MCF 10A (cell line): ENCODE measurements at regions of chr12 and their contacts with region 1.

Region 1: DNA sequence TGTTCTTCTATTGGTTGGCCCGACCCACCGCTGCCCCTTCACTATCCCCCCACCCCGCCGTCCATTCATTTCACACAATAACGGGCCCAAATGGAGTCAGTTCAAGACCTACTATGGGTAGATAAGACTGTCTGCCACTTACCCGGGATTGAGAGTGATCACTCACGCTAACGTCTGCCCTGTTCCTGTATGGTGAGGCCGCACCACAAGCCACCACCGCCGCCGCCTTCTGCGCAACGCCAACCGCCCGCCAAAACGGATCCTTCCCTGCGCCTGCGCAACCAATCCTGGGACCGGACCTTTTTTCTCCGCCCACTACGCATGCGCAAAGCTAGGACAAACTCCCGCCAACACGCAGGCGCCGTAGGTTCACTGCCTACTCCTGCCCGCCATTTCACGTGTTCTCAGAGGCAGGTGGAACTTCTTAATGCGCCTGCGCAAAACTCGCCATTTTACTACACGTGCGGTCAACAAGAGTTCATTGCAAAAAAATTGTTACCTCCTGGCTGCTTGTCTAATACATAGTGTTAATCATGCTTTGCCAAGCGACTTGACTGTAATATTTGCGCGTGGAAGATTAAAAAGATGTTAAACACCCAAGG is at the start of gene CBX5:
- DNase-seq: peak; percentile 99
- H3K4me3 Mint-ChIP-seq: no peak within 1 kb of the TSS
- H3K27ac Mint-ChIP-seq: no peak within 1 kb of the TSS
- H3K4me1 Mint-ChIP-seq: peaks cover 23% of the 10 kb centered on the region
- H3K27me3 Mint-ChIP-seq: no peaks in the 10 kb centered on the region
- CTCF ChIP-seq: no peak
- total RNA-seq, gene CBX5: 109 and 112 TPM in 2 replicates

Region 2: GRCh38 chr12:53999559-54000104 is 280.3 kb before region 1 on chr12:
- CTCF ChIA-PET with region 1: no interaction called
- POLR2A ChIA-PET with region 1: interaction called, 13 read pairs
- intact Hi-C with region 1: no loop called
- DNase-seq: peak; percentile 90
- H3K4me3 Mint-ChIP-seq: peak overlapping the region; percentile 89
- H3K27ac Mint-ChIP-seq: peak overlapping the region; percentile 97
- H3K4me1 Mint-ChIP-seq: peaks cover 12% of the 10 kb centered on the region
- H3K27me3 Mint-ChIP-seq: no peaks in the 10 kb centered on the region
- CTCF ChIP-seq: no peak

Region 3: GRCh38 chr12:54220092-54220557 is 59.8 kb before region 1 on chr12:
- CTCF ChIA-PET with region 1: interaction called, 4 read pairs
- POLR2A ChIA-PET with region 1: interaction called, 12 read pairs
- intact Hi-C with region 1: loop called (anchors 5 kb)
- DNase-seq: peak; percentile 75
- H3K4me3 Mint-ChIP-seq: no peak overlapping the region
- H3K27ac Mint-ChIP-seq: no peak overlapping the region
- H3K4me1 Mint-ChIP-seq: peaks cover 18% of the 10 kb centered on the region
- H3K27me3 Mint-ChIP-seq: no peaks in the 10 kb centered on the region
- CTCF ChIP-seq: peak; percentile 78

Region 4: DNA sequence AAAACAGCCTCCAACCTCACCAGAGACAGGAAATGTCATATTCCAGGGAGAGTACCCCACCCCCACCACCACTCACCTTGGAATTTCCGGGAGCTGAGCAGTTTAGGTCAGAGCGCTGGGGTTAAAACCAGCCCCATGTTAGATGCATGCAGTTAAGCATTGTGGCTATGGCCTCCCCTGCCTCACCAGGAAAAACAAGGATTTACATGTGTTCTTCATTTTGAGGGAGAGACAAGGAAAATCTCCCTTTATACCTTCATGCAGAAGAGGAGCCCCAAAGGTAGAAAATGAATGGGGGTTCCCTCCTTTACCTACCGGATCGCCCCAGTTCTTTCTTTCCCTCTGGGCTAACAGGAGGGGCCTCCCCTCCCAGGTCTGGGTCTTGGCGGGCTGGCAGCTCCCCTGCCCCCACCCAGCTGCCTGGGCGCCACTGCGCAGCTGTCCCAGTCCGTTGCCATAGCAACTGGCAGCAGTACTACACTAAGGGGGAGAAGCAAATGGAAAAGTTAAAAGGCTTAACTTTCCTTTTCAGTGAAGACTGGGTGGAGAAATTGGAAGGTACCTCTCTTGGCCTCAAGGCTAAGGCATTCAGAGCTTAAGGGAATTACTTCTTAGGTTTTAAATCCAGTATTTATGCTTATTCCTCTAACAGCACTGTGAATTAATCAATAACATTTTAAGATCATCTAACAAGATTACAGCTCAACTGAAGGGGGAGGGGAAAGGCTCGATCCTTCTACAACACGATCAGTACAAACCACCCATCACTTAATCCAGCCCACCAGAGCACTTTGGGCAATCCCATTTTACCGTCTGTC is 20.6 kb before region 1 on chr12:
- CTCF ChIA-PET with region 1: interaction called, 7 read pairs
- POLR2A ChIA-PET with region 1: interaction called, 99 read pairs
- intact Hi-C with region 1: loop called (anchors 2 kb)
- DNase-seq: peak; percentile 76
- H3K4me3 Mint-ChIP-seq: peak overlapping the region; percentile 63
- H3K27ac Mint-ChIP-seq: peak overlapping the region; percentile 83
- H3K4me1 Mint-ChIP-seq: peaks cover 14% of the 10 kb centered on the region
- H3K27me3 Mint-ChIP-seq: no peaks in the 10 kb centered on the region
- CTCF ChIP-seq: no peak

Region 5: GRCh38 chr12:54300732-54301427 is 20.9 kb after region 1 on chr12 and contains the start of gene NFE2:
- CTCF ChIA-PET with region 1: interaction called, 3 read pairs
- POLR2A ChIA-PET with region 1: interaction called, 26 read pairs
- intact Hi-C with region 1: no loop called
- DNase-seq: peak; percentile 79
- H3K4me3 Mint-ChIP-seq: peak within 1 kb of the TSS; percentile 4
- H3K27ac Mint-ChIP-seq: peak within 1 kb of the TSS; percentile 6
- H3K4me1 Mint-ChIP-seq: peaks cover 46% of the 10 kb centered on the region
- H3K27me3 Mint-ChIP-seq: no peaks in the 10 kb centered on the region
- CTCF ChIP-seq: no peak
- total RNA-seq, gene NFE2: 0.40 and 0.64 TPM in 2 replicates

Region 6: DNA sequence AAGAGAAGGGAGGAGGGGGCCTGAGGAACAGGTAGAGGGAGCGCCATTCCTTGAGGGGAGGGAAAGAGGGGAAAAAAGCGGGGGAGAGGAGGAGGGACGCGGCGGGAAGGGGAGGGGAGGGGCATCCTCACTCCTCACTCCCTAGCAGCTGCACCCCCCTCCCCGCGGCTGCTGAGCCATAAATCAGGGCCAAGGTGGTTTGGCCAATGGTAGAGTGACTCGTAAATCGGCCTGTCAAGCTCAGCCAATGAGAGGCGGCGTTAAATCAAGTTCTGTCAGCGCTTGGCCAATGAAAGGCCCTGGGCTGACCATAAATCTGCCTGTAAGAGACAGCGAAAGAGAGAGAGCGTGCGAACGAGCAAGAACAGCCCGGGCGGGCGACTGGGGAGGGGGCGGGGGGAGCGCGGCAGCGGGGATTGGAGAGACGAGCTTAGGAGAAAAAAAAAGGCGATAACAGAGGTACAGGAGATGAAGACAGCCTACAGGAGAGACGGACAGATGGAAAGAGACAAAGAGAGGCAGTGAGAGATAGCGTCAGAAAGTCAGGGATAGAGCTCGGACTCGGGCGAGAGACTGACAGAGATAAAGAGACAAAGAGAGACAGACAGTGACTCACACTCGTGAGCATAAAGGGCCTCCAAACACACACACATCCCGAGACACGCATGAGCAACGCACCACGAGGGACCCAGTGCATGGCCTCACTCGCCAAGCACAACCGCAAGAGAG is 79.2 kb after region 1 on chr12:
- CTCF ChIA-PET with region 1: interaction called, 6 read pairs
- POLR2A ChIA-PET with region 1: interaction called, 47 read pairs
- intact Hi-C with region 1: no loop called
- DNase-seq: peak; percentile 99
- H3K4me3 Mint-ChIP-seq: no peak overlapping the region
- H3K27ac Mint-ChIP-seq: no peak overlapping the region
- H3K4me1 Mint-ChIP-seq: peaks cover 23% of the 10 kb centered on the region
- H3K27me3 Mint-ChIP-seq: no peaks in the 10 kb centered on the region
- CTCF ChIP-seq: no peak